Transverse colon (tissue), 4 donors: ENCODE measurements at regions of chr6 and their contacts with region 1.

Region 1: GRCh38 chr6:37979392-37980221 is 160.1 kb downstream of the ZFAND3 start:
- DNase-seq: no peak
- H3K4me3 ChIP-seq: no peak overlapping the region
- H3K27ac ChIP-seq: no peak overlapping the region
- H3K4me1 ChIP-seq: peaks cover 5 to 29% (median 8%) of the 10 kb centered on the region in 4 donors
- H3K27me3 ChIP-seq: no peaks in the 10 kb centered on the region
- CTCF ChIP-seq: no peak
- EP300 ChIP-seq: no peak
- POLR2A ChIP-seq: no peak

Region 2: DNA sequence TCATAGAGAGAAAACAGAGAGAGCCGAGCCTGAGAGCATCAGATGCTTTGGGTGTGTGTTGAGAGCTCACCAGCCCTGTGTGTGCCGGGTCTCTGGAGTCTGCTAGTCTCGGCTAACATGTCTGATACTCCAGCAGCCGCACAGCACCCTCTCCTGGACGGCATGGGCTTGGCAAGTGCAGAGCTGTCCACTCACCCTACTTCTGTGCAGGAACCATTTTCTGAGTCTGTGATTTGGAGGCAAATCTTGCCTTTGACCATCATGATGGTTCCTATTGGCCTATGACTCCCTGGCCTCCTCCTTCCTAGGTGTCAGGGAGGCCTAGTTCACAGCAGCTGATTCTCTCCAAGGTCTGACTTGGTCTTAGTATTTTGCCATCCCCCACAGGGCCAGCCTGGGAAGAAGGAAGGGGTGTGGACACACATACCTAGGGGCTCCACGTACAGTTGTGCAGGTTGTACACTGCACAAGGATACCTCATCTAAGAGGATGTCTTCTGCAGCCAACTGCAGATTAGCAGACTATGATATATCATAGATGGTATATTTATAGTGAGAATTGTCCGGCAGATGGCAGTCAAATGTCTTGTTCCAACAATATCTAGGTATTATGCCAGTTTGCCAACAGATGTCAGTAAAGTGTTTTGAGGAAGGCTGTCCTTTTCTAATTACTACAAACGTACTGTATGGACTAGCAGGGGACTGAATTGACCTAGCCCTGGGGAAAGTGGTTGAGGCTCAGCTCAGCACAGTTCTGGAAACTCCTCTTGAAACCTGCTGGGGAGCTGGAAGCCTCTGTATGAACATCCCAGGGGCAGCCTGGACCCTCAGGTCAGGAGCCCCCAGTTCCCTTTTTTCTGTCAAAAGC is 961.2 kb before region 1 on chr6:
- in situ Hi-C with region 1: no loop called
- intact Hi-C with region 1: no loop called
- DNase-seq: peak; percentile 92
- H3K4me3 ChIP-seq: no peak overlapping the region
- H3K27ac ChIP-seq: peak overlapping the region; percentile 30 to 45 (median 42)
- H3K4me1 ChIP-seq: peaks cover 0 to 19% (median 8%) of the 10 kb centered on the region in 4 donors
- H3K27me3 ChIP-seq: no peaks in the 10 kb centered on the region
- CTCF ChIP-seq: peak; percentile 83 to 93 (median 89)
- EP300 ChIP-seq: no peak
- POLR2A ChIP-seq: no peak

Region 3: DNA sequence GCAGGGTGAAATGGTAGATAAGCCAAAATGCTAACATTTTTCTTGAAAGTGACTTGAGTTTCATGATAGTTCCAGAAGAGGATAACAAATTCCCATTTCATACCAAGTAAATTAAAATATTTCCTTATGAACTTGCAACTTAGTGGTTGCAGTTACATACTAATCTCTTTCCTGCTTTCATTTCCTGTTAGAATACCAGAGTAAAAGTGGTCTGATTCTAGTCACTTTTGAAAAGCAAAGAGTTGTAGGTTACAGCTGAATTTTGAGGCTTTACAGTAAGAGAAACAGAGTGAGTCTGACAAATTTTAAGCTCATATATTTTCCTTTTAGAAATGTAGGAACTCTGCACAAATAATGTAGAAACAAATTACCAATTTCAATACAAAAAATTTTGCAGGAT is 42.7 kb before region 1 on chr6:
- in situ Hi-C with region 1: no loop called
- intact Hi-C with region 1: loop called (anchors 1 kb)
- DNase-seq: no peak
- H3K4me3 ChIP-seq: no peak overlapping the region
- H3K27ac ChIP-seq: no peak overlapping the region
- H3K4me1 ChIP-seq: peaks cover 0 to 28% (median 6%) of the 10 kb centered on the region in 4 donors
- H3K27me3 ChIP-seq: no peaks in the 10 kb centered on the region
- CTCF ChIP-seq: no peak
- EP300 ChIP-seq: no peak
- POLR2A ChIP-seq: no peak

Region 4: DNA sequence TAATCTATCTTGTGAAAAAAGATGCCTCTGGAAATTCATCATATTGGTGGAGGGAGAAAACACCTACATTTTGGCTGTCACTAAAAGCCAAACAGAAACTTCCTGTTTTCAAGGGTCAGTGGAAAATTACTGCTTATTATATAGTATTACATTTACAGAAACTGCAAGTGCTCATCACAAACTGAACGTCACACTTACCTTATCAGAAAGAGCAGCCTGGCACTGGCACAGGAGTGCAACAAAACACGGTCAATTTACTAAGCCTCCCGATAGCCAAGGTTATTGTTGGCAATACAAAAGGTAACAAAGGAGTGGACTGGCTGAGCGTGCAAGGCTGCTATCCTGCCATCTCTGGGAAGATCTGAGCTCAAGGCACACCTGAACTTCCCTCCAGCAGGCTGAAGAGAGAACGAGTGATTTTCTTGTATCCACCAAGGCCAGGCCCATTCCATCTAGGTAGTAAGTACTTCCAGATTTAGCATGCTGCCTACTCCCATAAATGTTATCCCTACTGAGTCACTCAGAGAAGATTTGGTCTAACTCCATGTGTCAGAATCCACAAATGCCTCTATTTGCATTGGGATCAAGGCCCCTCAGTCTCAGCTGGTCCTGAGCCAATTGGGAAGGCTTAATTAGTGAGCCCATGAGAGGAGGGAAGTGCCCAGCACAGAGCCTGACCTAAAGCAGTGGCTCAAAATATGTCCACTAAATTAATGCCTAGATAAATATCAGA is 260.3 kb after region 1 on chr6:
- in situ Hi-C with region 1: no loop called
- intact Hi-C with region 1: no loop called
- DNase-seq: no peak
- H3K4me3 ChIP-seq: no peak overlapping the region
- H3K27ac ChIP-seq: no peak overlapping the region
- H3K4me1 ChIP-seq: no peaks in the 10 kb centered on the region
- H3K27me3 ChIP-seq: no peaks in the 10 kb centered on the region
- CTCF ChIP-seq: no peak
- EP300 ChIP-seq: no peak
- POLR2A ChIP-seq: no peak